Activated naive CD8-positive, alpha-beta T cell treated with anti-CD3 and anti-CD28 coated beads, Interleukin-2, amount 10 ng/mL, durations not matched to agents 7 days and 5 days (primary cell): ENCODE measurements at regions of chr1 and their contacts with region 1.

Region 1: GRCh38 chr1:41673378-41673777 is 188.9 kb upstream of the EDN2 start:
- DNase-seq: no peak
- ATAC-seq: peak; percentile 91
- H3K4me3 Mint-ChIP-seq: peak overlapping the region; percentile 75
- H3K27ac Mint-ChIP-seq: peak overlapping the region; percentile 83
- H3K4me1 Mint-ChIP-seq: peaks cover 61% of the 10 kb centered on the region
- H3K27me3 Mint-ChIP-seq: no peaks in the 10 kb centered on the region

Region 2: GRCh38 chr1:41496080-41497055 is 177.0 kb before region 1 on chr1:
- POLR2A ChIA-PET with region 1: no interaction called
- DNase-seq: peak; percentile 65
- ATAC-seq: peak; percentile 68
- H3K4me3 Mint-ChIP-seq: peak overlapping the region; percentile 69
- H3K27ac Mint-ChIP-seq: no peak overlapping the region
- H3K4me1 Mint-ChIP-seq: peaks cover 4% of the 10 kb centered on the region
- H3K27me3 Mint-ChIP-seq: peaks cover 3% of the 10 kb centered on the region

Region 3: GRCh38 chr1:41662061-41662764 is 11.2 kb before region 1 on chr1:
- POLR2A ChIA-PET with region 1: interaction called, 30 read pairs
- DNase-seq: peak; percentile 72
- ATAC-seq: peak; percentile 83
- H3K4me3 Mint-ChIP-seq: peak overlapping the region; percentile 63
- H3K27ac Mint-ChIP-seq: peak overlapping the region; percentile 53
- H3K4me1 Mint-ChIP-seq: peaks cover 55% of the 10 kb centered on the region
- H3K27me3 Mint-ChIP-seq: no peaks in the 10 kb centered on the region

Region 4: DNA sequence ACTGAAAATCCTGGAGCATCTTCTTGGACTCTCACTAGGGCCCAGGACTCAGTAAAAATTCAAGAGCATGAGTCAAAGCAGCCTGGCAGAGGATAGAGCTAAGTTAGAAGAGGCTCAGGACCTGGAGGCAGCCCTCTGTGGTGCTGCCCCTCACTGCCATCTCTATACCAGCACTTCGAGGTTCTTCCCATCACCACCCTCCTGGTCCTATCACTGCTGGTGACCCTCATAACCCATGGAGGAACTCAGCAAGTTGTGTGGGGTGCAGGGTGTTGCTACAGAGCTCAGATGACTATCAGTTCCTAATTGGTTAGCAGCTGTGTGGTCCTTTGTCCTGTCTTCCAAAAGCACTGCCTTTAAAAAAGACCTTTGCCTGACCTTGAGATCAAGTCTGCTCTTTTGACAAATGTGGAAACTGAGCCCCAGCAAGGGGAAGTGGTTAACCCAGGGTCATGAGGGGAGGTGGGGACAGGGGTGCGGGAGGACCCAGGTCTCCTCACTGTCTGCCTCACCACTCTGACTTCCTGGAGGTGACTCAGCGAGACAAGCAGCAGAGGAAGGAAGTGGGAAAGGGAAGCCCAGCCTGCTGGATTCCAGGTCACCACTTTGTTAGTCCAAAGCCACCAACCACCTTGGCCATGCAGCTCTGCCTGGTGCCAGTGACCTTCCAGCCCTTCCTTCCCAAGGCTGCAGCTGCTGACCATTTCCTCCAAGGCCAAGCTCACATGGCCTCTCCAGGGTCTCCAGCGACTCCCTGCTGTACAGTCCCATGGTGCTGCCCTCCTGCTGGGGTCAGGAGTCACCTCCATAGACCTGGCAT is 10.5 kb after region 1 on chr1:
- POLR2A ChIA-PET with region 1: interaction called, 26 read pairs
- DNase-seq: no peak
- ATAC-seq: peak; percentile 60
- H3K4me3 Mint-ChIP-seq: peak overlapping the region; percentile 51
- H3K27ac Mint-ChIP-seq: peak overlapping the region; percentile 84
- H3K4me1 Mint-ChIP-seq: peaks cover 72% of the 10 kb centered on the region
- H3K27me3 Mint-ChIP-seq: peaks cover 6% of the 10 kb centered on the region

Region 5: GRCh38 chr1:42013881-42014470 is 340.6 kb after region 1 on chr1:
- POLR2A ChIA-PET with region 1: no interaction called
- DNase-seq: no peak
- ATAC-seq: no peak
- H3K4me3 Mint-ChIP-seq: peak overlapping the region; percentile 17
- H3K27ac Mint-ChIP-seq: peak overlapping the region; percentile 39
- H3K4me1 Mint-ChIP-seq: peaks cover 19% of the 10 kb centered on the region
- H3K27me3 Mint-ChIP-seq: no peaks in the 10 kb centered on the region